Activated B cell treated with CpG ODN at 0.5 μM for 24 hours (primary cell): ENCODE measurements at regions of chr9 and their contacts with region 1.

Region 1: GRCh38 chr9:129988607-129989361 is 54.2 kb downstream of the FNBP1 start:
- DNase-seq: no peak
- ATAC-seq: peak; percentile 70
- H3K4me3 Mint-ChIP-seq: peak overlapping the region; percentile 60
- H3K27ac Mint-ChIP-seq: peak overlapping the region; percentile 89
- H3K4me1 Mint-ChIP-seq: peaks cover 93% of the 10 kb centered on the region
- H3K27me3 Mint-ChIP-seq: no peaks in the 10 kb centered on the region
- CTCF ChIP-seq: no peak

Region 2: DNA sequence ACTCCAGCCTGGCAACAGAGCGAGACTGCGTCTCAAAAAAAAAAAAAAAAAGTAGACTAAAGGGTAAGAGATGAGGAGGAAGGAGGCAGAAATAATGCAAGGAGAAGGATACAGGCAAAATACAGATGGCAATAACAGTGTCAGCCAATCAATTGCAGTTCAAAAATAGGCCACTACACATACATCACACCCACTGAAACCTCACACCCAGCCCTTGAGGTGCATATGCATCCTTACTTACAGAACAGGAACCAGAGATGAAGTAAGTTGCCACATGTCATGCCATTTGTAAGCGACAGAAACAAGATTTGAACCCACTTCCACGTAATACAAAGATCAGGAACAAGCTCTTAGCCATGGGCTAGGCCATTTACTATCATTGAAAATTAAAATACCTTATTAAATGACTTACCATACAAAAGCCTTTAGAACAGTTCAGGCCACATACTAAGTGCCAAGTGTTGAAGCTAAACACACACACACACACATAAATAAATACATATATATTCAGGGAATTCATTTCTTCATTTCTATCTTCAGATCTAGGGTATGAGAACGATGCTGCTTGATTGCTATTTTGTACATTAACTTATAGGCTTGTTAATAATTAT is 44.2 kb before region 1 on chr9:
- CTCF ChIA-PET with region 1: no interaction called
- POLR2A ChIA-PET with region 1: interaction called, 11 read pairs
- intact Hi-C with region 1: no loop called
- DNase-seq: no peak
- ATAC-seq: peak; percentile 69
- H3K4me3 Mint-ChIP-seq: no peak overlapping the region
- H3K27ac Mint-ChIP-seq: peak overlapping the region; percentile 32
- H3K4me1 Mint-ChIP-seq: peaks cover 30% of the 10 kb centered on the region
- H3K27me3 Mint-ChIP-seq: no peaks in the 10 kb centered on the region
- CTCF ChIP-seq: no peak

Region 3: GRCh38 chr9:129962889-129963703 is 25.7 kb before region 1 on chr9:
- CTCF ChIA-PET with region 1: no interaction called
- POLR2A ChIA-PET with region 1: interaction called, 16 read pairs
- intact Hi-C with region 1: no loop called
- DNase-seq: no peak
- ATAC-seq: peak; percentile 94
- H3K4me3 Mint-ChIP-seq: peak overlapping the region; percentile 81
- H3K27ac Mint-ChIP-seq: peak overlapping the region; percentile 90
- H3K4me1 Mint-ChIP-seq: peaks cover 67% of the 10 kb centered on the region
- H3K27me3 Mint-ChIP-seq: no peaks in the 10 kb centered on the region
- CTCF ChIP-seq: no peak

Region 4: GRCh38 chr9:130010151-130010988 is 21.6 kb after region 1 on chr9:
- CTCF ChIA-PET with region 1: interaction called, 4 read pairs
- POLR2A ChIA-PET with region 1: interaction called, 455 read pairs
- intact Hi-C with region 1: loop called (anchors 1 kb)
- DNase-seq: no peak
- ATAC-seq: peak; percentile 71
- H3K4me3 Mint-ChIP-seq: peak overlapping the region; percentile 58
- H3K27ac Mint-ChIP-seq: peak overlapping the region; percentile 97
- H3K4me1 Mint-ChIP-seq: peaks cover 92% of the 10 kb centered on the region
- H3K27me3 Mint-ChIP-seq: no peaks in the 10 kb centered on the region
- CTCF ChIP-seq: no peak

Region 5: DNA sequence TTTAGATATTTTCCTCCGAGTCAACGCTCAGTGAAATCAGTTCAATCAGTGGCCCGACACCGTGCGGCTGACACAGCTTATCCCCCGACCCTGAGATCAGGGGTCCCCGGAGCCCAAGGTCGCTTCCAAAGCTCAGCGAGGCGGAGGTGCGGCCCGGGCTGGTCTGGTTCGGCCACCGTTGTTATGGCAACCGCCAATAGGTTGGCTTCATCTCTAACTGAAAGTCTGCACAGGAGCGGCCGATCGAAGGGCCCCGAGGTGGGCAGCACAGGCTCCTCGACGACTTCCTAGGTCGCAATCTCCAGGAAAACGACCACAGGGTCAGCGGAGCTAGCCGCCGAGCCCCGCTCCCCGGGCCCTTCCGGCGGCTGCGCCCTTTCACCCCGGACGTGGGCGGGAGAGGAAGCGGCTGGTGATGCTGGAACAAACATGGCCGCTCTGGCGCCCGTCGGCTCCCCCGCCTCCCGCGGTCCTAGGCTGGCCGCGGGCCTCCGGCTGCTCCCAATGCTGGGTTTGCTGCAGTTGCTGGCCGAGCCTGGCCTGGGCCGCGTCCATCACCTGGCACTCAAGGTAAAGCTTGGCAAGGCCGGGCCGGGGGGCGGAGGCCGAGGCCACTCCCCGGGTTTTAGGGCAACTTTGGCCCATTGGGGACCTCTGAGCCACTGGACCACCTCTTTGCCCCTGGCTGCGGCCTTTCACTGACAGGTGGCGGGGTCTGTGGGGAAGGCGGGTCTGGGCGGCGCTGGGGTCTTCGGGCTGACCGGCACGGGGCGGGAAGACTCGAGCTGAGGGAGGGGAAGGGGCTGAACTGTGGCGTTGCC is 64.9 kb after region 1 on chr9 and contains the start of gene GPR107:
- CTCF ChIA-PET with region 1: no interaction called
- POLR2A ChIA-PET with region 1: interaction called, 11 read pairs
- intact Hi-C with region 1: no loop called
- DNase-seq: peak; percentile 73
- ATAC-seq: peak; percentile 96
- H3K4me3 Mint-ChIP-seq: peak within 1 kb of the TSS; percentile 91
- H3K27ac Mint-ChIP-seq: peak within 1 kb of the TSS; percentile 80
- H3K4me1 Mint-ChIP-seq: peaks cover 30% of the 10 kb centered on the region
- H3K27me3 Mint-ChIP-seq: no peaks in the 10 kb centered on the region
- CTCF ChIP-seq: no peak
- total RNA-seq, gene GPR107: 17.7 and 19.6 TPM in 2 replicates